A673 (cell line): ENCODE measurements at regions of chr11 and their contacts with region 1.

Region 1: GRCh38 chr11:6603287-6604080 is at the starts of genes ILK and RRP8:
- DNase-seq: peak; percentile 91
- H3K4me3 ChIP-seq: peak within 1 kb of the TSS; percentile 74
- H3K27ac ChIP-seq: peak within 1 kb of the TSS; percentile 78
- H3K4me1 ChIP-seq: peaks cover 10% of the 10 kb centered on the region
- H3K27me3 ChIP-seq: no peaks in the 10 kb centered on the region
- CTCF ChIP-seq: no peak
- total RNA-seq, gene ILK: 85.2 and 86.5 TPM in 2 replicates
- total RNA-seq, gene RRP8: 19.1 and 21.6 TPM in 2 replicates

Region 2: GRCh38 chr11:6481012-6481923 is 122.2 kb before region 1 on chr11 and contains the starts of genes ARFIP2 and TIMM10B:
- CTCF ChIA-PET with region 1: no interaction called
- POLR2A ChIA-PET with region 1: no interaction called
- intact Hi-C with region 1: loop called (anchors 5 kb)
- DNase-seq: peak; percentile 98
- H3K4me3 ChIP-seq: peak within 1 kb of the TSS; percentile 88
- H3K27ac ChIP-seq: peak within 1 kb of the TSS; percentile 97
- H3K4me1 ChIP-seq: peaks cover 9% of the 10 kb centered on the region
- H3K27me3 ChIP-seq: no peaks in the 10 kb centered on the region
- CTCF ChIP-seq: no peak
- total RNA-seq, gene ARFIP2: 57.7 and 65.0 TPM in 2 replicates
- total RNA-seq, gene TIMM10B: 30.7 and 40.3 TPM in 2 replicates